ENCODE measurements at regions of chr12 and their contacts with region 1.

Region 1: DNA sequence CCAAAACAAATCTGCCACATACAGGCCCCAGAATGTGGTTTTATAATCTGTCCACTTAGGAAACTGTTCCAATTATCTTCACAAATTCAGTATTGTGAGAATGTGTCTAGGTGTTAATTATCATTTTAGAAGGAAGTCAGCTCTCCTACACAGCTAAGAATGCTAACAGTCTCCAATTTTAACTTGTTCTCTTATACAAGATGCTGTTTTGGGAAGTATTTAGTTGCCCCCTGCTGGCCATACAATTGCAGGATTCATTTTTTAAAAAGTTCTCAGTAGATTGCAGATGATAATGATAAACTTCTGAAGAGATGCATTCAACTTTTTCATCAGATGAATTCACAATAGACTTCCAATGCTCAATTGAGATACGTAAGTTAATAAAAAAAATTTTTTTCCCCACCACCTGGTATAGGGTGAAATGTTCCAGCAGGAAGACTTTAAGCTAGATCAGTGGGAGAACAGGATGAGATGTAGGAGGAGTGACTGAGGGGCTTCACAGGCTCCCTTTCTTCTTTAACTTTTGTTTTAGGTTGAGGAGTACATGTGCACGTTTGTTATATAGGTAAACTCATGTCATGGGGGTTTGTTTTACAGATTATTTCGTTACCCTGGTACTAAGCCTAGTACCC is 27.3 kb upstream of the OSBPL8 start:
- H3K4me3 Mint-ChIP-seq: no peak overlapping the region
- H3K27ac Mint-ChIP-seq: no peak overlapping the region
- H3K4me1 Mint-ChIP-seq: peaks cover 32% of the 10 kb centered on the region
- H3K27me3 Mint-ChIP-seq: no peaks in the 10 kb centered on the region

Region 2: DNA sequence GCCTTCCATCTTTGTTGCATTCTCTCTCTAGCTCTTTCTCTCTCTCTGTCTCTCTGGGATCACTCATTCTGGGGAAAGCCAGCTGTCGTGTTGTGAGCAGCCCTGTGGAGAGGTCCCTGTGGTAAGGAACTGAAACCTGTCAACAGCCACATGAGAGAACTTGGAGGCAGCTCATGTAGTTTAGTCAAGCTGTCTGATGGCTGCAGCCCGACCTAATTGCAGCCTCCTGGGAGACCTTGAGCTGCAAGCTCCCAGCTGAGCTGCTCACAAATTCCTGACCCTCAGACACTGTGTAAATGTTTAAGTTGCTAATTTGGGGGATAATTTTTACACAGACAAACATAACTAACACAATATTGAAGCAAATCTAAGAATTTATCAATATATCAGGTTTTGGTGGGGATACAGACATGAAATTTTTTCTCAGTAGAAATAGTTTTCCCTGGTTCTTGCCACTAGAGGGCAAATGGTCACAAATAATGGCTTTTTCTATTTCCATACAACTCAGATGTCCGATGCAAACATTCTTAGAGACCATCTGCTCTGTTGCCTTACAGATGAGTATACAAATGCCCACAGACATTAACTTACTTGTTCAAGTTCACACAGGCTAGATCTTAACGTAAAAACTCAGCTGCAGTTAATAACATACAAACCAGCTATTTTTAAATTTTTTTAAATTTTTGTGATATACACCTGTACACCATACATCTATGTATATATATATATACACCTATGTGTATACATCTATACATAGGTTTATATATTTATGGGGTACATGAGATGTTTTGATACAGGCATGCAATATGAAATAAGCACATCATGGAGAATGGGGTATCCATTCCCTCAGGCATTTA is 1060.0 kb before region 1 on chr12:
- intact Hi-C with region 1: loop called (anchors 10 kb)
- H3K4me3 Mint-ChIP-seq: no peak overlapping the region
- H3K27ac Mint-ChIP-seq: peak overlapping the region; percentile 35
- H3K4me1 Mint-ChIP-seq: peaks cover 7% of the 10 kb centered on the region
- H3K27me3 Mint-ChIP-seq: peaks cover 9% of the 10 kb centered on the region

Region 3: DNA sequence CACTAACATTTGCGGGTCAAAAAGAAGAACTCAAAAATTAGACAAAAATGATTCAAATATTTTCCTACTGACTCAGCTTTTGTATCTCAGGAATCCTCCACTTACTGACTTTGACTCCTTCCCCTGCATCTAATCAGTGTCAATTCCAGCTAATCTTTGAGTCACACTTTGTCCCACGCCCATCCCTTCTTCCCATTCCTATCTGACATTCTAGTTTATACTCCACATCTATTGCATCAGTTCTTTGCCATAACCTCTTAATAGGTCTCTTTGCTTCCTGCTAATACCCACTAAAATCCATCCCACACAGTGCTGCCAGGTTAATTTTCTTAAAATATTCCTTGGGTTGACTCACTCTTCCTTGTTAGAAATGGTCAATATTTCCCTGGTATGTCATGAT is 257.7 kb before region 1 on chr12:
- intact Hi-C with region 1: no loop called
- H3K4me3 Mint-ChIP-seq: no peak overlapping the region
- H3K27ac Mint-ChIP-seq: no peak overlapping the region
- H3K4me1 Mint-ChIP-seq: peaks cover 9% of the 10 kb centered on the region
- H3K27me3 Mint-ChIP-seq: peaks cover 8% of the 10 kb centered on the region

Region 4: DNA sequence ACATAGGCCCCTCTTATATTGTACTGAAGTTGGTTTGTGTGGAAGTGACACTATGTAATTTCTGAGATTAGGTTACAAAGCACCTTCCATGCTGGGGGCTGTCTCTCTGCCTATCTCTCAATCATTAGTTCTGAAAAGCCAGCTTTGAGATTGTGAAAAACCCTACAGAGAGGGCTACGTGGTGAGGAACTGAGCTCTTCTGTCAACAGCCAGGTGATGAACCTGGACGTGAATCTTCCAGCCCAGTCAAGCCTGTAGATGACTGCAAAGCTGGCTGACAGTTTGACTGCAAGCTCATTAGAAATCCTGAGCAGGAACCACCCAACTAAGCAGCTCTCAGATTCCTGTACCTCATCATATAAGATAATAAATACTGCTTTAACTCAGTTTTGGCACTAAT is 202.3 kb before region 1 on chr12:
- intact Hi-C with region 1: loop called (anchors 10 kb)
- H3K4me3 Mint-ChIP-seq: no peak overlapping the region
- H3K27ac Mint-ChIP-seq: no peak overlapping the region
- H3K4me1 Mint-ChIP-seq: peaks cover under 1% of the 10 kb centered on the region
- H3K27me3 Mint-ChIP-seq: no peaks in the 10 kb centered on the region